GM12878 (cell line): ENCODE measurements at regions of chr5 and their contacts with region 1.

Region 1: DNA sequence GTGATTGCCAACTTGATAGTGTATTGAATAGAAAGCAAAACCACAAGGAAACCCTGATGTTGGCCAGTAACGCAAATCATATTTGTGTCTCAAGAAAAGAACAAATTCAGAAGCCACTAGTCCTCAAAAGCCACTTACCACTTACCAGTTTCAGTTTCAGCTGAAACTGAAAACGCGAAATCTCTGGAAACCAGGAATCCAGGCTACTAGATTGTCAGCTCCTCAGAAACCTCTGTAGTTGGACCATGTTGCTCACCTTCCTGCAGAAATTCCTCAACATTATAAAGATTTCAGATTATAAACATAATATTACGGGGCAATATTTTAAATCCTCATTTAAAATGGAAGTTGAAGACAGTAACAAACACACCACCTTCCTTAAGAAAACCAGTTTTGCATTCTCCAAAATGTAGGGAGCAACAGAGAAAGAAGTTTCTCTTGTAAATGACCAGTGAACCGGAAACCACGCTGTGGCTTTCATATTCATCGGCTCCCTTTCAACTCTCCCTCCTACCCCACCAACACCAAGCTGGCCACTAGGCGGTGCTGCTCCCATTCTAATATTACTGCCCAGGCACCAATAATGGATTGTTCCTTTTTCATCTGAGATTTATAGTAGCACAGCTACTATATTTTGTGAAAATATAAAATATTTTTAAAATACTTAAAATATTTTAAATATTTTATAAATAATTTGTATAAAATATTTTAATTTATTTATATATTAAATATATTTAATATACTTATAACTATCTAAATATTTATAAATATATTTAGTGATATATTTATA is 8.7 kb upstream of the TMED7 start:
- DNase-seq: peak; percentile 73
- ATAC-seq: peak; percentile 86
- H3K4me3 ChIP-seq: peak overlapping the region; percentile 58
- H3K27ac ChIP-seq: no peak overlapping the region
- H3K4me1 ChIP-seq: peaks cover 18% of the 10 kb centered on the region
- H3K27me3 ChIP-seq: peaks cover 2 to 13% of the 10 kb centered on the region in 2 experiments; a peak in 2 of 4 replicates
- CTCF ChIP-seq: peak; percentile 94 to 99 (median 96); a peak in 5 of 6 replicates
- EP300 ChIP-seq: peak; percentile 7 to 25; a peak in 1 of 4 replicates
- POLR2A ChIP-seq: no peak
- RAD21 ChIP-seq: peak; percentile 99

Region 2: GRCh38 chr5:115601701-115602590 is 32.6 kb before region 1 on chr5 and contains the start of gene TICAM2:
- CTCF ChIA-PET with region 1: interaction called, 4 read pairs
- POLR2A ChIA-PET with region 1: interaction called, 4 read pairs
- RAD21 ChIA-PET with region 1: interaction called, 3 read pairs
- SMC1A ChIA-PET with region 1: interaction called, 13 read pairs
- in situ Hi-C with region 1: no loop called
- intact Hi-C with region 1: no loop called
- DNase-seq: peak; percentile 77
- ATAC-seq: peak; percentile 87
- H3K4me3 ChIP-seq: peak within 1 kb of the TSS; percentile 85
- H3K27ac ChIP-seq: peak within 1 kb of the TSS; percentile 94
- H3K4me1 ChIP-seq: peaks cover 22% of the 10 kb centered on the region
- H3K27me3 ChIP-seq: no peaks in the 10 kb centered on the region
- CTCF ChIP-seq: peak in 2 of 3 experiments; percentile 4 to 21; a peak in 1 of 6 replicates
- EP300 ChIP-seq: peak; percentile 66 to 76
- POLR2A ChIP-seq: peak; percentile 88
- RAD21 ChIP-seq: no peak
- polyA plus RNA-seq, gene TICAM2: 1.8 to 2.3 TPM

Region 3: DNA sequence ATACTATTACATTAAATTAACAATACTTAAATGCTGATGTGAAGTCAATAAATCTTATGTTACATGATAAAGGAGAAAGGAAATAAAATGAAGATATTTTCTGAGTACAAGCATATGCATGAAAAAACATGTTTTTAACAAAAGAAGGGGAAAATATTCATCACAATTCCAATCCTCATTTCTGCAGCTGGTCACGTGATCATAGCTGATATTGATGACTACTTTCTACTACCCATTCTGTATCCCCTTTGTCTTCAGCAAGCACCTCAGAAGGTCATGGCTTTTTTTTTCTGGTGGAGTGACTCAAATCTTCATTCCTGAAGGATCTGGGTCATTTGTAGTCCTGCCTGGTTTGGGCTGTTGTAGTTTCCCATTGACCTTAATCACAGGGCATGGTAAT is 91.0 kb after region 1 on chr5:
- CTCF ChIA-PET with region 1: no interaction called
- POLR2A ChIA-PET with region 1: no interaction called
- RAD21 ChIA-PET with region 1: no interaction called
- SMC1A ChIA-PET with region 1: no interaction called
- in situ Hi-C with region 1: no loop called
- intact Hi-C with region 1: no loop called
- DNase-seq: no peak
- ATAC-seq: no peak
- H3K4me3 ChIP-seq: no peak overlapping the region
- H3K27ac ChIP-seq: no peak overlapping the region
- H3K4me1 ChIP-seq: no peaks in the 10 kb centered on the region
- H3K27me3 ChIP-seq: peaks cover 0 to 1% of the 10 kb centered on the region in 2 experiments; a peak in 1 of 4 replicates
- CTCF ChIP-seq: no peak
- EP300 ChIP-seq: no peak
- POLR2A ChIP-seq: no peak
- RAD21 ChIP-seq: no peak

Region 4: GRCh38 chr5:115831163-115831768 is 196.7 kb after region 1 on chr5:
- CTCF ChIA-PET with region 1: interaction called, 23 read pairs
- POLR2A ChIA-PET with region 1: interaction called, 4 read pairs
- RAD21 ChIA-PET with region 1: interaction called, 7 read pairs
- SMC1A ChIA-PET with region 1: interaction called, 8 read pairs
- in situ Hi-C with region 1: no loop called
- intact Hi-C with region 1: loop called (anchors 1 kb)
- DNase-seq: no peak
- ATAC-seq: peak; percentile 84
- H3K4me3 ChIP-seq: no peak overlapping the region
- H3K27ac ChIP-seq: no peak overlapping the region
- H3K4me1 ChIP-seq: no peaks in the 10 kb centered on the region
- H3K27me3 ChIP-seq: no peaks in the 10 kb centered on the region
- CTCF ChIP-seq: peak; percentile 65 to 80 (median 72)
- EP300 ChIP-seq: no peak
- POLR2A ChIP-seq: no peak
- RAD21 ChIP-seq: peak; percentile 67

Region 5: DNA sequence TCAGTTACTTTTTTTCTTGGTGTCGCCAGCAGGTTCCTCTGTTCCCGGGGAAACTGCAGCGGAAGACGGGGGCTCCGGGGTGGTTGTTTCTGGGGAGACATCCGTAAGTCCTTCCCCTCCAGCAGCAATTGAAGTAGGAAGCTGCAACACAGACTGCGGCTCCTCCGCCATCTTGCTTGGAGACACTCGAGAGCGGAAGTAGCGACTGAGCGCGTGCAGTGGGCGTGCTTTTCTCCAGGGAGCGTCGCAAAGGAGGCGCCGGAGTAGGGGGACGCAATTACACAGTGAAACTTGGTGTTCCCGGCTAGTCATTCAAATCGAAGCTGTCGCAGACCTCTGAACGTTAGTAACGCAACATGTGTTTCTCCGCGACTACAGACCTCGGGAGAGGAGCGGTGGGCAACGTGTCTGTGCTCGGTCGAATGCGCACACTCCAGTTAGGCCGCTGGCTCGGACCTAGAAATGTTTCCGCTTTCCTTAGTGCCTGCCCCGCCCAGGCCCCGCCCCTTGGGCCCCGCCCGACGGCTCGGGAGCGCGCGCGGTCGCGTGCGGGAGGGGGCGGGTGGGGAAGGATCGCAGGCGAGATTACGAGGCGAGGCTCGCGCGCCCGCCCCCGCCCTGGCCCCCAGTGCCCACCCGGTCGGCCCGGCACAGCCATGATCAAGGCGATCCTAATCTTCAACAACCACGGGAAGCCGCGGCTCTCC is 207.0 kb after region 1 on chr5 and contains the starts of genes AP3S1 and ATG12:
- CTCF ChIA-PET with region 1: interaction called, 4 read pairs
- POLR2A ChIA-PET with region 1: no interaction called
- RAD21 ChIA-PET with region 1: interaction called, 14 read pairs
- SMC1A ChIA-PET with region 1: interaction called, 22 read pairs
- in situ Hi-C with region 1: no loop called
- intact Hi-C with region 1: loop called (anchors 1 kb)
- DNase-seq: peak; percentile 88
- ATAC-seq: peak; percentile 84
- H3K4me3 ChIP-seq: peak within 1 kb of the TSS; percentile 83
- H3K27ac ChIP-seq: peak within 1 kb of the TSS; percentile 91
- H3K4me1 ChIP-seq: peaks cover 19% of the 10 kb centered on the region
- H3K27me3 ChIP-seq: no peaks in the 10 kb centered on the region
- CTCF ChIP-seq: no peak
- EP300 ChIP-seq: no peak
- POLR2A ChIP-seq: peak; percentile 93
- RAD21 ChIP-seq: no peak
- polyA plus RNA-seq, gene AP3S1: 36.4 to 48.5 TPM
- polyA plus RNA-seq, gene ATG12: 67.4 to 92.0 TPM

Region 6: GRCh38 chr5:116032094-116032517 is 397.6 kb after region 1 on chr5 and contains the start of gene ARL14EPL:
- CTCF ChIA-PET with region 1: interaction called, 9 read pairs
- POLR2A ChIA-PET with region 1: no interaction called
- RAD21 ChIA-PET with region 1: interaction called, 8 read pairs
- SMC1A ChIA-PET with region 1: interaction called, 12 read pairs
- in situ Hi-C with region 1: no loop called
- intact Hi-C with region 1: no loop called
- DNase-seq: no peak
- ATAC-seq: peak; percentile 95
- H3K4me3 ChIP-seq: no peak within 1 kb of the TSS
- H3K27ac ChIP-seq: no peak within 1 kb of the TSS
- H3K4me1 ChIP-seq: peaks cover 13% of the 10 kb centered on the region; the same call in 1 of the 2 replicates
- H3K27me3 ChIP-seq: no peaks in the 10 kb centered on the region; a peak in 1 of 4 replicates
- CTCF ChIP-seq: peak; percentile 29 to 56 (median 53); a peak in 4 of 6 replicates
- EP300 ChIP-seq: no peak
- POLR2A ChIP-seq: no peak
- RAD21 ChIP-seq: peak; percentile 82
- polyA plus RNA-seq, gene ARL14EPL: not detected

Region 7: DNA sequence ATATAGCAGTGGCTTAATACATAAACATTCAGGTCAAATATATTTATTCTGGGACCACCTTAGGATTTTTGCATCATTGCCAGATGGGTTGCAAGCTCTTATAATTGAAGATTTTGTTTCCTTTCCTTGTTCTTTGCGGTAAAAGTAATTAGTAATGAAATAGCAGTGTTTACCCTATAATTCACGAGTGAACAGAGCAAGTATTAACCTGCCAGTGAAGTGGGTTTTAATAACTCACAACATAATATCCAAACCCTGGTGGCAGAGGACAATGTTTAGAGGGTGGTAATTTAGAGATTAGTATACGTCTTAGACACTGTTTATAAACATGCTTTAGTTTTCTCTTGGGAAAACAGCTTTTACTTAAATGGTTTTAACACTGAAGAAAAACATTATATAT is 409.5 kb after region 1 on chr5:
- CTCF ChIA-PET with region 1: interaction called, 10 read pairs
- POLR2A ChIA-PET with region 1: no interaction called
- RAD21 ChIA-PET with region 1: no interaction called
- SMC1A ChIA-PET with region 1: interaction called, 3 read pairs
- in situ Hi-C with region 1: no loop called
- intact Hi-C with region 1: no loop called
- DNase-seq: no peak
- ATAC-seq: no peak
- H3K4me3 ChIP-seq: no peak overlapping the region
- H3K27ac ChIP-seq: no peak overlapping the region
- H3K4me1 ChIP-seq: no peaks in the 10 kb centered on the region
- H3K27me3 ChIP-seq: no peaks in the 10 kb centered on the region; a peak in 1 of 4 replicates
- CTCF ChIP-seq: no peak
- EP300 ChIP-seq: no peak
- POLR2A ChIP-seq: no peak
- RAD21 ChIP-seq: no peak

Region 8: GRCh38 chr5:116068028-116068632 is 433.6 kb after region 1 on chr5:
- CTCF ChIA-PET with region 1: interaction called, 33 read pairs
- POLR2A ChIA-PET with region 1: no interaction called
- RAD21 ChIA-PET with region 1: interaction called, 9 read pairs
- SMC1A ChIA-PET with region 1: interaction called, 18 read pairs
- in situ Hi-C with region 1: no loop called
- intact Hi-C with region 1: loop called (anchors 1 kb)
- DNase-seq: no peak
- ATAC-seq: peak; percentile 74
- H3K4me3 ChIP-seq: no peak overlapping the region
- H3K27ac ChIP-seq: no peak overlapping the region
- H3K4me1 ChIP-seq: no peaks in the 10 kb centered on the region
- H3K27me3 ChIP-seq: peaks cover 2 to 3% of the 10 kb centered on the region in 2 experiments; a peak in 3 of 4 replicates
- CTCF ChIP-seq: peak; percentile 42 to 68 (median 67); a peak in 5 of 6 replicates
- EP300 ChIP-seq: no peak
- POLR2A ChIP-seq: no peak
- RAD21 ChIP-seq: peak; percentile 84